Right ventricle myocardium superior (tissue), 1 donor: ENCODE measurements at regions of chr6 and their contacts with region 1.

Region 1: GRCh38 chr6:52577022-52577777 is at the start of gene TRAM2:
- DNase-seq: peak; percentile 93
- ATAC-seq: peak; percentile 91
- total RNA-seq, gene TRAM2: 11.0 TPM

Region 2: DNA sequence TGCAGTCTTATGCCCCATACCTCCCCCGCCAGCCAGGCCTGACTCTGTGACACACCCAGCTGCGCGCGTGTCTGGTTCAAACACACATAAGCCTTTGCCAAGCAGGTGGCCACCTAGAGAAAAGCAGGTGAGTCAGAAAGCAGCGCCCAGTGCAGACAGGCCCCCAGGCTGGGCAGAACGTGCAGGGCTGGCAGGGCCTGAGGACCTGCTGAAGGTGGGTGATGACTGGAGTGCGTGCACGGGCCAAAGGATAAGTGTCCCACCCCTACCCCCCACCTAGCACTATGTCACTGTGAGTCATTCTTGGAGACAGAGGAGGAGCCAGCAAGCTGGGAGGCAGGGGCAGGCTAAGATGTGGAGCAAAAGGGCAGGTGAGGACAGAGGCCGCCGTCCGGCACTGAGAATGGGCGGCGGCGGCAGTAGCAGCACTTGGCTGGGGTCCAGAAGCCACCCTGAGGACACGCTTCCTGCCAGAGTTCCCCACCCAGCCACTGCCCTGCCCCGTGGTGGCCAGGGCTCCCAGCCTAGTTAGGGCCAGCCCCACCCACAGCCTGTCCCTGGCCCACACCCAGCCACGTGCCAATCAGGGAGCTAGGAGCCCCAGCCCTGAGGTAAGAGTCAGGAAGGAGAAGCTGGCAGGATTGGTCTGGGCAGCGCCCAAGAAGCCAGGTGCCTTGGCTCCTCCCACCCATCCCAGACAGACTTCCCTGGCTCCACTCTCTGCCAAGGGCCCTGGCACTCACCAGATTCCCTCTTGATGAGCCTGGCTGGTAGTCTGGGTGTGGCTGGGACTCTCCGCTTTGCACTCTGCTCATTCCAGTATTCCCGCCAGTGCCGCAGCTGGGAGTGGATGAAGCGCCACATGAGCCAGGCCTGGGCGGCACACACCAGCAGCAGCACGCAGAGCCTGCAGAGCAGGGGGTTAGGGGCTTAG is 73.1 kb before region 1 on chr6:
- intact Hi-C with region 1: loop called (anchors 5 kb)
- DNase-seq: peak; percentile 94
- ATAC-seq: peak; percentile 86

Region 3: GRCh38 chr6:52512199-52512598 is 65.0 kb before region 1 on chr6:
- intact Hi-C with region 1: loop called (anchors 5 kb)
- DNase-seq: peak; percentile 55
- ATAC-seq: peak; percentile 83